ENCODE measurements at regions of chr9 and their contacts with region 1.

Region 1: DNA sequence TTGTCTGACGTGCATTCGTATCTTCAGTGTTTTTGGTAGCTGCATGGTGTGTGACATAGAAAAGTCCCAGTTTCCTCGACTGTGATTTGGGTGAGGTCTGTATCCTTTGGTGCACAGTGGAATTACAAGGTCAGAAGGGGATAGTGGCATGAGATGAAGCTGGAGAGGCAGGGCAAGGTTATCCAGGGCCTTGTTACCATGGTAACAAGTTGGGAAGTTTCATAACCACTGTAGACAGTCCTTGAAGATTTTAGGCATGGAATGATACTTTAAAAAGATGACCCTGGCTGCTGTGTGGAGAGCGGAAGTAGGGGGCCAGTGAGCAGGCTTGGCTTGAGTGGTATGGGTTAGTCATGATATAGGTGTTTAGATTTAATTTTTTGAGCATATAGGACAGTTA is 11.9 kb downstream of the EHMT1 start:
- DNase-seq: peak in 1 of 3 donors; percentile 49
- H3K4me3 ChIP-seq: peak overlapping the region in 5 of 7 experiments; percentile 1 to 62 (median 30)
- H3K27ac ChIP-seq: peak overlapping the region in 1 of 2 experiments; percentile 44
- H3K4me1 ChIP-seq: peaks cover 19 to 69% (median 60%) of the 10 kb centered on the region in 4 experiments
- H3K27me3 ChIP-seq: no peaks in the 10 kb centered on the region

Region 2: DNA sequence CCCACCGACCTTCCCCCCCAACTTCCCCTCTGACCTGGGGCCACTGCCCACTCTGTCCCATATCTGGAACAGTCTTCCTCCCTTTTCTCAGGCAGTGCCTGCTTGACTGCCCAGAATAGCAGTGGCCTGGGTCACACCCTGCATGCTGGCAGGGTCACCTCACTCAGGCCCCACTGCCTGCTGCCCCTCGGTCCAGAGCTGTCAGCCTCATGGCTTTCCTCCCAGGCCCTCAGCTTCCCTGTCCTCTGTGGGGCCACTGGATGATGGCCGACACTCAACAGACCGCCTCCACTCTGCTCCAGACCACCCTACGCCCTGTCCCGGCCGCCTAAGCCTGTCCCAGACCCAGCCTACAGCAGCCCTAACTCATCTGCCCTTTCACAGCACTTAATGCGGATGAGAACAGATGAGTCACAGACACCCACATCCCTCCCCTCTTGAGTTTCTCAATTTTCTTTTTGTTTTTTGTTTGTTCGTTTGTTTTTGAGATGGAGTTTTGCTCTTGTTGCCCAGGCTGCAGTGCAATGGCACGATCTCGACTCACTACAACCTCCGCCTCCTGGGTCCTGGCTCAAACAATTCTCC is 86.4 kb before region 1 on chr9:
- CTCF ChIA-PET with region 1: no interaction called
- POLR2A ChIA-PET with region 1: no interaction called
- DNase-seq: no peak
- H3K4me3 ChIP-seq: no peak overlapping the region
- H3K27ac ChIP-seq: no peak overlapping the region
- H3K4me1 ChIP-seq: peaks cover 0 to 4% (median 0%) of the 10 kb centered on the region in 4 experiments
- H3K27me3 ChIP-seq: no peaks in the 10 kb centered on the region

Region 3: GRCh38 chr9:137575364-137575715 is 55.3 kb before region 1 on chr9:
- CTCF ChIA-PET with region 1: no interaction called
- POLR2A ChIA-PET with region 1: no interaction called
- DNase-seq: no peak
- H3K4me3 ChIP-seq: no peak overlapping the region
- H3K27ac ChIP-seq: no peak overlapping the region
- H3K4me1 ChIP-seq: peaks cover 4 to 25% (median 15%) of the 10 kb centered on the region in 4 experiments
- H3K27me3 ChIP-seq: no peaks in the 10 kb centered on the region

Region 4: DNA sequence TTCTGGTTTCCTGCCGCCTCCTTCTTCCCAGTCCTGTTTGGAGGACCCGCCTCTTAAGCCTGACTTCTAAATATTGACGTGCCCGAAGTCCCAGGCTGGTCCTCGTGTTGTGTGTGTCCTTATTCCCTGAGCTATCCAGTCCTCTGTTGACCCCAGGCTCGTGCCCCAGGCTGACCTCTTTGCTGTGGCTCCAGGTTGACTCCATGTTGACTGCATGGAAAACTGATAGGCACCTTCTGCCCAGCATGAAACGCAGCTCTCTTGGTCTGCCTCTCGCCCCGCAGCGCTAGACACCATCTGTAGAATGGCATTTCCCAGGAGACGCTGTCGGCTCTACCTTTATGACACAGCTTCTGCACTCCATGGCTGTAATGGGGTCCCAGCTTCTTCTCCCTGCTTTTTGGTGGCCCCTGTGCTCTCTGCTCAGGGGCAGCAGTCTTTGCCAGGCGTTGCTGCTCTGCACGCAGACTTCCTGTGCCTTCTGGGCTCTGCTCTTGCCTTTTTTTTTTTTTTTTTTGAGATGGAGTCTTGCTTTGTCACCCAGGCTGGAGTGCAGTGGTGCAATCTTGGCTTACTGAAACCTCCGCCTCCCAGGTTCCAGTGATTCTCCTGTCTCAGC is 16.5 kb after region 1 on chr9:
- CTCF ChIA-PET with region 1: interaction called, 16 read pairs
- POLR2A ChIA-PET with region 1: no interaction called
- DNase-seq: peak; percentile 43 to 83 (median 82)
- H3K4me3 ChIP-seq: peak overlapping the region in 6 of 7 experiments; percentile 40 to 75 (median 59)
- H3K27ac ChIP-seq: peak overlapping the region; percentile 54 to 78
- H3K4me1 ChIP-seq: peaks cover 3 to 30% (median 29%) of the 10 kb centered on the region in 4 experiments
- H3K27me3 ChIP-seq: no peaks in the 10 kb centered on the region